GM10248 (cell line): ENCODE measurements at regions of chr4 and their contacts with region 1.

Region 1: GRCh38 chr4:121192480-121192879 is 28.4 kb upstream of the TNIP3 start:
- DNase-seq: peak; percentile 24
- CTCF ChIP-seq: peak; percentile 69

Region 2: GRCh38 chr4:120965938-120966337 is 226.5 kb before region 1 on chr4:
- CTCF ChIA-PET with region 1: no interaction called
- POLR2A ChIA-PET with region 1: no interaction called
- DNase-seq: no peak
- CTCF ChIP-seq: no peak

Region 3: GRCh38 chr4:121168446-121169281 is 23.8 kb before region 1 on chr4:
- CTCF ChIA-PET with region 1: interaction called, 19 read pairs
- POLR2A ChIA-PET with region 1: no interaction called
- DNase-seq: peak; percentile 64
- CTCF ChIP-seq: no peak

Region 4: DNA sequence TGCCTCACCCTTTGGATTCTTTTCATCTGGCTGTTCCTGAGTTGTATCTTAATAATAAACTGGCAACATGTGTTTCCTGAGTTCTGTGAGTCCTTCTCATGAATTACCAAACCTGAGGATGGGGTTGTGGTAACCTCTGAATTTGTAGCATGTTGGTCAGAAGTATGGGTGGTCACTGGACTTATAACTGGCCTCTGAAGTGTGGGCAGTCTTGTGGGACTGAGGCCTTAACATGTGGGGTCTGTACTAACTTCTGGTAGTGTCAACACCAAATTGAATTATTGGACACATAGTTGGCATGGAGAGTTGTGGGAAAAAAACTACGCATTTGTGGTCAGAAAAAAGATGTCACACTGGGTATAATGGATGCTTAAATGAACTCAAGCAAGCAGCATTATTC is 16.7 kb after region 1 on chr4:
- CTCF ChIA-PET with region 1: interaction called, 47 read pairs
- POLR2A ChIA-PET with region 1: no interaction called
- DNase-seq: no peak
- CTCF ChIP-seq: no peak

Region 5: GRCh38 chr4:121227341-121227792 is 34.9 kb after region 1 on chr4:
- CTCF ChIA-PET with region 1: interaction called, 30 read pairs
- POLR2A ChIA-PET with region 1: no interaction called
- DNase-seq: peak; percentile 23
- CTCF ChIP-seq: no peak

Region 6: GRCh38 chr4:121252224-121252806 is 59.8 kb after region 1 on chr4:
- CTCF ChIA-PET with region 1: interaction called, 144 read pairs
- POLR2A ChIA-PET with region 1: no interaction called
- DNase-seq: peak; percentile 56
- CTCF ChIP-seq: peak; percentile 79

Region 7: DNA sequence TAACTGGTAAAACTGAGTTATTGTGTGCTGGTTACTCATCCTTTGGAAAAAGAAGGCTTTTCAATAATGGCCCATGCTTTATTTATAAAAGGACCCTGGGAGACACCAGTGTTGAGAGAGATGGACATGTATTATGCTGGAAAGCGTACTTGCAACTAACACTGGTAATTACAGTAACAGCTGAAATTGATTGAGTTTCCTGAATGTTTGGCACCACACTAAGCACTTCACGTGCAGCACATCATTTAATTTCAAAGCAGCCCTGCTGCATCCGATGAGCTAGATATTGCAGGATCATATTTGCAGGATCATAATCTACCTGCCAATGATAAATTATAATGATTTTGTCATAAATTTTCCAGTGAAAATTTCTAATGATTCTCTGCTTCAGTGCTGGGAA is 106.9 kb after region 1 on chr4:
- CTCF ChIA-PET with region 1: interaction called, 15 read pairs
- POLR2A ChIA-PET with region 1: no interaction called
- DNase-seq: no peak
- CTCF ChIP-seq: no peak